ENCODE measurements at regions of chr2 and their contacts with region 1.

Region 1: GRCh38 chr2:62505750-62506420 is at the start of gene TMEM17:
- DNase-seq: peak; percentile 90
- H3K4me3 ChIP-seq: peak within 1 kb of the TSS; percentile 60 to 97 (median 96)
- H3K27ac ChIP-seq: peak within 1 kb of the TSS; percentile 84
- H3K4me1 ChIP-seq: peaks cover 7% of the 10 kb centered on the region
- H3K27me3 ChIP-seq: no peaks in the 10 kb centered on the region
- CTCF ChIP-seq: no peak
- POLR2A ChIP-seq: no peak
- total RNA-seq, gene TMEM17: 0.91 and 1.2 TPM in 2 replicates

Region 2: DNA sequence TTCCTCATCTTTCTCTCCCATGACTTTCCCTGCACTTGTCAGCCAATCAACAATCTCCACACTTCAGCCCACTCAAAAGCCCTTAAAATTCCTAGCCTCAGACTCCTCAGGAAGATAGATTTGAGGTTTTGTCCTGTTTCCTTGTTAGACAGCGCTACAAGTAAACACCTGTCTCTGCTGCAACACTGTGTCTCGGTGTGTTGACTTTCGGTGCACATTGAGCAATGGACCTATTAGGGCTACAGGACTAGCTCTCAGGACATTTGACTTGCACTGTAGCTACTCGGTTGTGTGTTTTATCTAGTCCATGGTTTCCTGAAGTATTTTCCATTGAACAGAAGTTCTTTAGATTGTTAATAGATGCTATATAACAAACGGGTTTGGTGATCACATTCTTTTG is 826.8 kb before region 1 on chr2:
- CTCF ChIA-PET with region 1: no interaction called
- POLR2A ChIA-PET with region 1: no interaction called
- dilution Hi-C with region 1: no loop called
- intact Hi-C with region 1: no loop called
- DNase-seq: no peak
- H3K4me3 ChIP-seq: no peak overlapping the region
- H3K27ac ChIP-seq: no peak overlapping the region
- H3K4me1 ChIP-seq: no peaks in the 10 kb centered on the region
- H3K27me3 ChIP-seq: peaks cover 3 to 5% of the 10 kb centered on the region in 2 experiments
- CTCF ChIP-seq: no peak
- POLR2A ChIP-seq: no peak

Region 3: DNA sequence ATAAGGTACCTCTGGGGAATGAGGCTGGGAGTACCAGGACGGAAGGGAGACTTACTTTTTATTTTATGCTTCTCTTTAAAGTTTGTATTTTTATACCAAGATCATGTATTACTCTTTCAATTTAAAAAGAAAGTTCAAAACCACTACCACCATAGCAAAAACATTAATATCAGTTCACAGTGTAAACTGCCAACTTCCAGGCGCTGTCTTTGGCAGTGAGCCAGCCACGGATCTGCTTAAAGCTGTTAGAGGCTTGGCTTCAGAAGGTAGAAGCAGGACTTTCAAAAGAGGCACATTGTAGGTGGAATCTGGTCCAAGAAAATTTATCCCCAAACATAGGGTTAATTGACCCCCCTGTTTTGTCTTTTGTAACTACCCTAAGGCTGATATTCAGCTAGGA is 235.2 kb before region 1 on chr2:
- CTCF ChIA-PET with region 1: no interaction called
- POLR2A ChIA-PET with region 1: no interaction called
- dilution Hi-C with region 1: no loop called
- intact Hi-C with region 1: no loop called
- DNase-seq: peak; percentile 61
- H3K4me3 ChIP-seq: no peak overlapping the region
- H3K27ac ChIP-seq: no peak overlapping the region
- H3K4me1 ChIP-seq: no peaks in the 10 kb centered on the region
- H3K27me3 ChIP-seq: no peaks in the 10 kb centered on the region
- CTCF ChIP-seq: no peak
- POLR2A ChIP-seq: no peak

Region 4: DNA sequence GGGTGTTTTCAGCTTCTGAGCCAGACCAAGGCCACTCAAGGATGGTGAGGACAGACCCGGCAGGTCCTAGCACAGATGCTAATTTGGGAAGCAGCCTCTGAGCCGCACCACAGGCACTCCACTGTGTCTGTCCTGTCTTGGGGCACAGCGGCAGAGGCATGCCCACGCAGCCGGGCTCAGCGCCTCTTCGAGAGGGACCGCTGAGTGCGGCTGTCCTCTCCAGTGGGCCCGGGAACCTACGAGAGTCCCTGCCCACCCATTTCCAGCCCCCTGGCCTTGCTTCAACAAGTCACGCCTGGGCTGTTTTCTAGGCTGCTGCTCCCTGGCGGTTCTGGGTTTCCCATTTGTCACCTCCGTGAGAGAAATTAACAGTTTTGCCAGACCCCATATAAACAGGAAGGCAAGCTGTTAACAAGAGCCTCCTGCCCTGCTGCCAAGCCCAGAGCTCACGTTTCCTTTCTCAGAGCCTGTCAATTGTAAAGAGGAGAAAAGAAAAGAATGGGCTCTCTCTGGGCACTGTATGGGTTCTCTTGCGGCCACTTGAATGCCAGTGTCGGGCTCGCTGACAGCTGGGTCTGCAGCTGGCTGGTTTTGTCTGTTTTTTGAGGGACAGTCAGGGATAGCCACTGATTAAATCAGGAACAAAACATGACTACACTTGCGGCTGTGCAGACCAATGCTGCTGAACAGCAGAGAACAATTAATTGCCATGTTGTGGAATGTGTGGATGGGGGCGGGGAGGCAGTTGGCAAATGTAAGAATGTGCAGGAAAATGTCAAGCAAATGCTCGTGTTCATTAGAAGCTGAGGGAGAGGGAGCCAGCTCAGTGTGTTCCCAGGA is 30.5 kb before region 1 on chr2:
- CTCF ChIA-PET with region 1: no interaction called
- POLR2A ChIA-PET with region 1: no interaction called
- dilution Hi-C with region 1: no loop called
- intact Hi-C with region 1: loop called (anchors 1 kb)
- DNase-seq: peak; percentile 95
- H3K4me3 ChIP-seq: peak overlapping the region in 1 of 3 experiments; percentile 24
- H3K27ac ChIP-seq: peak overlapping the region; percentile 8
- H3K4me1 ChIP-seq: peaks cover 28% of the 10 kb centered on the region
- H3K27me3 ChIP-seq: no peaks in the 10 kb centered on the region
- CTCF ChIP-seq: no peak
- POLR2A ChIP-seq: no peak

Region 5: DNA sequence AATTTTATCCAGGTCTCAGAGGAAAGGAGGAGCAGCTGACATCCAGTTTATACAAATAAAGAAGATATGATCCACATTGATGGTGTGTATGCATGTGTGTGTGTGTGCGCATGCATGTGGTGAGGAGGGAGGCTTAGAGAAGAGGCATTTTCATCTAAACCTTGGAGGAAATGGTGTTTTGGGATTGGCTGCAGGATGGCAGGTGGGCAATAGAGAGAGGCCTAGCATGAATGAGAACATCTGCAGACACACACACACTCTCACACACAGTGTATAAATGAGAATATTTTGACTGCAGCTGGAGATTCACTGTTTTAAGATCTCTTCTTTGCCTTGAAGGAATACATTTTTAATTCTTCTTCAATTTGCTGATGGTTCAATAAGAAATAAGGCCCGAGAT is 61.8 kb after region 1 on chr2:
- CTCF ChIA-PET with region 1: no interaction called
- POLR2A ChIA-PET with region 1: no interaction called
- dilution Hi-C with region 1: no loop called
- intact Hi-C with region 1: loop called (anchors 2 kb)
- DNase-seq: no peak
- H3K4me3 ChIP-seq: no peak overlapping the region
- H3K27ac ChIP-seq: no peak overlapping the region
- H3K4me1 ChIP-seq: peaks cover 8% of the 10 kb centered on the region
- H3K27me3 ChIP-seq: peaks cover 0 to 2% of the 10 kb centered on the region in 2 experiments
- CTCF ChIP-seq: no peak
- POLR2A ChIP-seq: no peak

Region 6: GRCh38 chr2:62577994-62578781 is 72.3 kb after region 1 on chr2:
- CTCF ChIA-PET with region 1: no interaction called
- POLR2A ChIA-PET with region 1: no interaction called
- dilution Hi-C with region 1: no loop called
- intact Hi-C with region 1: loop called (anchors 2 kb)
- DNase-seq: peak; percentile 80
- H3K4me3 ChIP-seq: no peak overlapping the region
- H3K27ac ChIP-seq: peak overlapping the region; percentile 85
- H3K4me1 ChIP-seq: peaks cover 24% of the 10 kb centered on the region
- H3K27me3 ChIP-seq: no peaks in the 10 kb centered on the region
- CTCF ChIP-seq: no peak
- POLR2A ChIP-seq: no peak

Region 7: DNA sequence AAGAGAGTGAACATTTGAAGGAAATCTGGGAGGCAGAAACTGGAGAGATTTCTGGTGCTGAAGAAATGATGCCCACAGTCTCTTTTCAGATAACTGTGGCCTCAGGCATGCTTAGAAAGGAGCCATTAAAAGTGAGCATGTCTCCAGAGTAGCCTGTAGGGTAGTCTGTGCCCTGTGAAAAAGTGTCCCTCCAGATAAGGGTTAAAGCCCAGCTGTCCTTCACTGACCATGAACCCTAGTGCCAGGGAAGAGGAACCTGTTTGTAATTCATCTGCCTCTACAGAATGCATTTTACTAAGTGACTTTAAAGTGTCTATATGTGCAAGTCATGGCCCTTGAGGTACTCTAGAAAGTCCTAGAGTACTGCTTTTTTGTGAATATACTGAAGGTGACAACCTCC is 169.2 kb after region 1 on chr2:
- CTCF ChIA-PET with region 1: no interaction called
- POLR2A ChIA-PET with region 1: interaction called, 10 read pairs
- dilution Hi-C with region 1: no loop called
- intact Hi-C with region 1: no loop called
- DNase-seq: no peak
- H3K4me3 ChIP-seq: no peak overlapping the region
- H3K27ac ChIP-seq: no peak overlapping the region
- H3K4me1 ChIP-seq: no peaks in the 10 kb centered on the region
- H3K27me3 ChIP-seq: peaks cover 1 to 4% of the 10 kb centered on the region in 2 experiments
- CTCF ChIP-seq: no peak
- POLR2A ChIP-seq: no peak

Region 8: DNA sequence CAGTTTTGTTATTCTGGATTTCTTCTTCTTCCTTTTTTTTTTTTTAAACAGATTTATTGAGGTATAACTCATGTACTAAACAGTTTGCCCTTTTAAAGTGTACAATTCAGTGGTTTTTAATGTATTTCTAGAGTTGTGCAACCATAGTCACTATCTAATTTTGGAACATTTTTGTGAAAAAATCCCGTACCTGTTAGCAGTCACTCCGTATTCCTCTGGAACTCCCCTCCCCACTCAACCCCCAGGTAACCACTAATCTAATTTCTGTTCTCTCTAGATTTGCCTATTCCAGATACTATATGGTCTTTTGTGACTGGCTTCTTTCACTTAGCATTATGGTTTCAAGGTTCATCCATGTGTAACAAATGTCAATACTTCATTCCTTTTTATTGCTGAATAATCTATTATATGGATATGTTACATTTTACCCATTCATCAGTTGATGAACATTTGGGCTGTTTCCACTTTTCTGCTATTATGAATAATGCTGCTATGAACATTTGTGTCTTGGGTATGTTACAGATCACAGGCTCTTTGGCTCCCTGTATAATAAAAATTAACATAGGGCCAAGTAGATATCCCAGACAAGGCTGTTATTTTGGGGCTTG is 221.5 kb after region 1 on chr2:
- CTCF ChIA-PET with region 1: no interaction called
- POLR2A ChIA-PET with region 1: no interaction called
- dilution Hi-C with region 1: no loop called
- intact Hi-C with region 1: no loop called
- DNase-seq: no peak
- H3K4me3 ChIP-seq: no peak overlapping the region
- H3K27ac ChIP-seq: no peak overlapping the region
- H3K4me1 ChIP-seq: no peaks in the 10 kb centered on the region
- H3K27me3 ChIP-seq: no peaks in the 10 kb centered on the region
- CTCF ChIP-seq: no peak
- POLR2A ChIP-seq: no peak

Region 9: GRCh38 chr2:62774555-62775366 is 268.9 kb after region 1 on chr2:
- CTCF ChIA-PET with region 1: no interaction called
- POLR2A ChIA-PET with region 1: no interaction called
- dilution Hi-C with region 1: no loop called
- intact Hi-C with region 1: loop called (anchors 1 kb)
- DNase-seq: peak; percentile 62
- H3K4me3 ChIP-seq: no peak overlapping the region
- H3K27ac ChIP-seq: no peak overlapping the region
- H3K4me1 ChIP-seq: no peaks in the 10 kb centered on the region
- H3K27me3 ChIP-seq: no peaks in the 10 kb centered on the region
- CTCF ChIP-seq: peak; percentile 38 to 41
- POLR2A ChIP-seq: no peak